ENCODE measurements at regions of chr3 and their contacts with region 1.

Region 1: DNA sequence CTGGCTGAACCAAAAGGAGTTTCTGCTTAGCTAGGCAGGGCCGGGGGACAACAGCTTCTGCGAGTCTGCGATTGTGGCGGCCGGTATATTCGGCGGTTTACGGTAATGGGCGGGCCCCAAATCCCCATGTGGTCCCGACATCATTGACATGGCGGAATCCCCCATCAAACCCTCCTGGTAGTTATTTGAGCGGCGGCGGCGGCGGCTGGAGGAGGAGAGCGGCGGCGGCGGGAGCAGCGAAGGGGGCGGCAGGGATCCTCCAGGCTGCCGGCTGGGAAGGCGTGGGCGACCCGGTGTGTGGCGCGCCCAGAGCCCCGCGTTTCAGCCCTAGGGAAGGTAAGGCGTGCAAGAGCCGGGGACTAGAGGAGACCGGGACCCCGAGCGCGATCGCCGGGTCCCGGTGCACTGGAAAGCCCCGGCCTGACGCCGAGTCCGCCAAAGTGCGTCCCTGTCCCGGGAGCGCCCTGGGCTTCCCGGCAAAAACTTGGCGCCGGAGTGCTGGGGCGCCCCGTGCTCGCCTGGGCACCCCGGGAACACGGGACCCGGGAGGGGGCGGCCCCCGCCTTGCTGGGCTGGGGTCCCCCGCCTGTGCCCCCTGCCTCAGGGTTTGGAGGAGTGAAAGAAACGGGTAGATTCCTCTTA is at the start of gene FNDC3B:
- DNase-seq: peak; percentile 95
- ATAC-seq: peak; percentile 66
- H3K4me3 ChIP-seq: peak within 1 kb of the TSS; percentile 63
- H3K27ac ChIP-seq: peak within 1 kb of the TSS; percentile 72
- H3K4me1 ChIP-seq: no peaks in the 10 kb centered on the region; the same call in 1 of the 2 replicates
- H3K27me3 ChIP-seq: no peaks in the 10 kb centered on the region
- CTCF ChIP-seq: no peak
- POLR2A ChIP-seq: peak; percentile 93
- RAD21 ChIP-seq: peak; percentile 34
- total RNA-seq, gene FNDC3B: 128 and 150 TPM in 2 replicates

Region 2: DNA sequence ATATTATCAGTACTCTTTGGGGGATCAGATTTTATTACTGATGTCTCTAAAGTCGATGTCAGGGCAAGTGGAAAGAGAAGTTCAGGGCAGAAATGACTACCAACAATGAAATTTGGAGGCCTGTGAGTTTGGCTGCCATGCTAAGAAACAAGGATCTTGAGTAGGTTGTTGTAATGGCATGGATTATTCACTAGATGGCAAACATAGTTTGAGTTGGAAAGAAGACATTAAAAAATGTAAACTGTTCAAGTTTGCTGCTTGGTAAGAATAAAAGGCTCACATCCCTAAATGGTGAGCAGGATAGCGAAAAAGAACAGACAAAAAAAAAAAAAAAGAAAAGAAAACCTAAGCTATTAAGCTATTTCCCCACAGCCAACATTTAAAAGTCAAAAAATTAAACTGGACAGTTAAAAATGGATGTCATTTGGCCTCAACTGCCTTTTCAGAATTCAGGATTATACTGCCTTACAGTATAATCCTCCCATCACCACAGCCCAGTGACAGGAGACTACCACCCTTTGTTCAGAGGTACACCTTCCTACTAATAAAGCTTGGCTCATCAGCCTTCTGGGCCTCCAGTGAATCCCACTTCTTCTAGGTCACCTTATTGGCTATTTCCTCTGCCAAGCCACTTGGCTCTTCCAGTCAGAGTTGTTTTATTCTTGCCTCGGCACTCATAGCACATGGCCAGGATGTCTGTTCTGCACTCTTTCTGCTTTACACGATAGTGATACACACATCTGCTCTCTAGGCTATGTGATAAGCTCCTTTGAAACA is 393.0 kb before region 1 on chr3:
- CTCF ChIA-PET with region 1: interaction called, 3 read pairs
- POLR2A ChIA-PET with region 1: no interaction called
- dilution Hi-C with region 1: no loop called
- in situ Hi-C with region 1: no loop called
- intact Hi-C with region 1: loop called (anchors 1 kb)
- DNase-seq: peak; percentile 80
- ATAC-seq: peak; percentile 90
- H3K4me3 ChIP-seq: no peak overlapping the region
- H3K27ac ChIP-seq: no peak overlapping the region
- H3K4me1 ChIP-seq: peaks cover 2% of the 10 kb centered on the region; the same call in 1 of the 2 replicates
- H3K27me3 ChIP-seq: no peaks in the 10 kb centered on the region
- CTCF ChIP-seq: peak; percentile 76
- POLR2A ChIP-seq: no peak
- RAD21 ChIP-seq: peak; percentile 83

Region 3: GRCh38 chr3:171829841-171830517 is 209.6 kb before region 1 on chr3:
- CTCF ChIA-PET with region 1: interaction called, 3 read pairs
- POLR2A ChIA-PET with region 1: no interaction called
- dilution Hi-C with region 1: no loop called
- in situ Hi-C with region 1: no loop called
- intact Hi-C with region 1: loop called (anchors 2 kb)
- DNase-seq: peak; percentile 85
- ATAC-seq: peak; percentile 64
- H3K4me3 ChIP-seq: no peak overlapping the region
- H3K27ac ChIP-seq: no peak overlapping the region
- H3K4me1 ChIP-seq: peaks cover 16% of the 10 kb centered on the region
- H3K27me3 ChIP-seq: no peaks in the 10 kb centered on the region
- CTCF ChIP-seq: peak; percentile 75
- POLR2A ChIP-seq: 0 out of 2 replicates have a peak, but pooled peaks have one; percentile 25
- RAD21 ChIP-seq: peak; percentile 76

Region 4: DNA sequence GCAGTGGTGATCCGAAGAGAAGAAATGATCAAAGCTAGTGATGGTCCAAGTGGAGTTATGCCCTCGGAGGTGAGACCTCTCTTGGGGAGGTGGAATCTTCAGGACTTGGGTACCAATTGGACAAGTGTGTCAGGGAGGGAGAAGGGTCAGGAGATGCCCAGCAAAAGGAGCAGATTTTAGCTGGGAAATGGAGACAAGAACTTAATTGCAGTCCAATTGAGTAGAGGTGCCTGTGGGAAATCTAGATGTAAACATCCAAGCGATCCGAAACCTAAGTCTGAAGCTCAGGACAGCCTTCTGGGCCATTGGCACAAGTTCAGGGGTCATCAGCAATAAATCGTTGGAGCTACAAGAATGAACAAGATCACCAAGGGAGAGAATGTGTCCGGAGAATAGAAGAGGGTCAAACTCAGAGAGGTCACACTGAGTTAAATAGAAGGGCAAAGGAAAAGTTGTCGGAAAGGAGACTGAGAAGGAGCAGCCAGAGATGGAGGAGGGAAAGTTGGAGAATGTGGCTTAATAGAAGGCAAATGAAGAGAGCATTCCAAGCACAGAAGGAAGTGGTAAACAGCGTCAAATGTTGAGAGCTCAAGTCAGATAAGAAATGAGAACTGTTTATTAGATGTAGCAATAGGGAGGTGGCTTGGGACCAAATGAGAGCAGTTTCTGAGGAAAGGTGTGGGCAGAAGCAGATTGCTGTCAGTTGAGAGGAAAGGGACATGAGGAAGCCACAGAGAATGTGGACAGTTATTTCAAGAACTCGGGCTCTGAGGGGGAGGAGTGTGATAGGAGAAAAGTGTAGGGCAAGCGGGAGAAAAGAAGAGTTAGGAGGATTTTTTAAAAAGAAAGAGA is 64.3 kb before region 1 on chr3:
- CTCF ChIA-PET with region 1: no interaction called
- POLR2A ChIA-PET with region 1: interaction called, 4 read pairs
- dilution Hi-C with region 1: no loop called
- in situ Hi-C with region 1: no loop called
- intact Hi-C with region 1: loop called (anchors 2 kb)
- DNase-seq: peak; percentile 92
- ATAC-seq: peak; percentile 80
- H3K4me3 ChIP-seq: no peak overlapping the region
- H3K27ac ChIP-seq: peak overlapping the region; percentile 87
- H3K4me1 ChIP-seq: peaks cover 29% of the 10 kb centered on the region
- H3K27me3 ChIP-seq: no peaks in the 10 kb centered on the region
- CTCF ChIP-seq: no peak
- POLR2A ChIP-seq: no peak
- RAD21 ChIP-seq: no peak

Region 5: DNA sequence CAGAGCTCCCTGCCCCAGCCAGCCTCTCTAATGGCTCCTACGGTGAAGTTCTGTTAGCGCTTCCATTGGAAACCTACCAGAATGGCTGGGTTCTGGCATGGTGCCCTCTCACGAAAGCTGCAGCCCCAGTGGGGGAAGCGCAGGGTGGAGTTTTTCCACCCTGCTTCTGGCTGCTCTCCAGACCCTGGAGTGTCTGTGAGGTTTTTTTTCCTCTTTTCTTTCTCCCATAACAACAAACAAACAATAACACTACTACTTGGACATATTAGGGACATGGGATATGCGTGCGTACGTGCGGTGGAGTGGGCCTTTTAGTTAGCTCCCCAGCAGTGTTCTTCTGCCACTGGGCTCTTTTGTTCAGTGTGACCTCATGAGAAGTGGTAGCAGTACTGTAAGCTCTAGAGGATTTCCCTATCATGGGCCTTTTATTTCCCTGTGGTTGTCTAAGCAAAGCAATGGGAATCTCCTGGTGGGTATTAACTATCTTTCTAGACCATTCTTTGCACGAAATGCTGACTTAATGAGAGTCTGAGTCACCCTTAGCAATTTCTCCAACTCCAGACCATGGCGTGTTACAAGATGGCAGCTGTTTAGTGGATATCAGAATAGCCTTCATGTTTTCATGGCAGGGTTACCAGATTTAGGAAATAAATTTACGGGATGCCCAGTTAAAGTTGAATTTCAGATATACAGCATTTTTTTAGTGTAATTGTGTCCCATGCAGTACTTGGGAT is 161.7 kb after region 1 on chr3:
- CTCF ChIA-PET with region 1: no interaction called
- POLR2A ChIA-PET with region 1: no interaction called
- dilution Hi-C with region 1: no loop called
- in situ Hi-C with region 1: no loop called
- intact Hi-C with region 1: loop called (anchors 10 kb)
- DNase-seq: peak; percentile 98
- ATAC-seq: peak; percentile 80
- H3K4me3 ChIP-seq: no peak overlapping the region
- H3K27ac ChIP-seq: peak overlapping the region; percentile 94
- H3K4me1 ChIP-seq: peaks cover 19% of the 10 kb centered on the region
- H3K27me3 ChIP-seq: no peaks in the 10 kb centered on the region
- CTCF ChIP-seq: no peak
- POLR2A ChIP-seq: 0 out of 2 replicates have a peak, but pooled peaks have one; percentile 45
- RAD21 ChIP-seq: 0 out of 2 replicates have a peak, but pooled peaks have one; percentile 14

Region 6: DNA sequence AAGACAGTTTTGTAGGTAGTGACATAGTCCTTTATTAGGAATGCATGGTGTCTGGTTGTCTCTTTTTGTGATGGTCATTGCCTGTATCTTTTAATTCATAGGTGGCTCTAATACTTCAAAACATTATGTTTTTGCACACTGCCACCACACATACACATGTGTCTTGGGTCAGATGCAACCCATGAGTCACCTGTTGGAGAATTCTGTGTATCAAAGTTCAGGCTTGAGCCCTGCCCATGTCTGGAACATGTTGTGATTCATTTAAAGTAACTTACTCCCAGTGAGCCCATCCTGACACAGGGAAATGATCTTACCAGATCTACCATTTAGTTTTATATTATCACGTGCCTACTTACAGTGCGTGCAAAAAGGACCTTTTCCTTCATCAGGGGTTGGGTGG is 266.0 kb after region 1 on chr3:
- CTCF ChIA-PET with region 1: no interaction called
- POLR2A ChIA-PET with region 1: no interaction called
- dilution Hi-C with region 1: no loop called
- in situ Hi-C with region 1: no loop called
- intact Hi-C with region 1: no loop called
- DNase-seq: peak; percentile 86
- ATAC-seq: peak; percentile 62
- H3K4me3 ChIP-seq: no peak overlapping the region
- H3K27ac ChIP-seq: no peak overlapping the region
- H3K4me1 ChIP-seq: peaks cover 17% of the 10 kb centered on the region
- H3K27me3 ChIP-seq: no peaks in the 10 kb centered on the region
- CTCF ChIP-seq: no peak
- POLR2A ChIP-seq: no peak
- RAD21 ChIP-seq: no peak